Endothelial cell of umbilical vein (primary cell): ENCODE measurements at regions of chr7 and their contacts with region 1.

Region 1: DNA sequence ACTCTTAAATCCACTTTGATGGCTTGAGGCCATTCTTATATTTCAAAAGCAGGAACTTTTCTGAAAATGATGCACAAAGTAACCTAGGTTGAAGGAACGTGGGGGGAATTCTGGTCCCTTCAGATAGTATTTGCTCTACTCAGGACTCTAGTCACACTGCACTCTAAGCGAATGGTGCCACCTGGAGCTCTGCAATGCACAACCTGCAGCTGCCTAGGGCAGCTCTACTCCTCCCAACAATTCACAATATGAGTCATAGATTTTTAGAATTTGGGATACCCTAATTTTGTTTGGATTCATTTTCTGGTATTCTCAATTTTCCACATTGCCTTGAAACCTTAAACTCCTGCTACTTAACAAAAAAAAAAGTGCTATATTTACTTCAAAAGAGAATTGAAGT is 17.3 kb downstream of the SYPL1 start:
- DNase-seq: no peak
- H3K4me3 ChIP-seq: no peak overlapping the region
- H3K27ac ChIP-seq: no peak overlapping the region
- H3K4me1 ChIP-seq: no peaks in the 10 kb centered on the region
- H3K27me3 ChIP-seq: no peaks in the 10 kb centered on the region
- CTCF ChIP-seq: no peak
- POLR2A ChIP-seq: no peak

Region 2: GRCh38 chr7:106071356-106071998 is 23.3 kb before region 1 on chr7:
- CTCF ChIA-PET with region 1: interaction called, 4 read pairs
- POLR2A ChIA-PET with region 1: interaction called, 12 read pairs
- dilution Hi-C with region 1: no loop called
- intact Hi-C with region 1: no loop called
- DNase-seq: peak; percentile 79
- H3K4me3 ChIP-seq: no peak overlapping the region
- H3K27ac ChIP-seq: peak overlapping the region; percentile 60
- H3K4me1 ChIP-seq: peaks cover 20% of the 10 kb centered on the region
- H3K27me3 ChIP-seq: no peaks in the 10 kb centered on the region
- CTCF ChIP-seq: no peak
- POLR2A ChIP-seq: no peak

Region 3: GRCh38 chr7:106126170-106126938 is 31.6 kb after region 1 on chr7:
- CTCF ChIA-PET with region 1: no interaction called
- POLR2A ChIA-PET with region 1: no interaction called
- dilution Hi-C with region 1: no loop called
- intact Hi-C with region 1: no loop called
- DNase-seq: peak; percentile 72
- H3K4me3 ChIP-seq: peak overlapping the region in 2 of 3 experiments; percentile 13 to 38
- H3K27ac ChIP-seq: no peak overlapping the region
- H3K4me1 ChIP-seq: peaks cover 8% of the 10 kb centered on the region
- H3K27me3 ChIP-seq: peaks cover 5 to 16% of the 10 kb centered on the region in 2 experiments
- CTCF ChIP-seq: no peak
- POLR2A ChIP-seq: no peak

Region 4: DNA sequence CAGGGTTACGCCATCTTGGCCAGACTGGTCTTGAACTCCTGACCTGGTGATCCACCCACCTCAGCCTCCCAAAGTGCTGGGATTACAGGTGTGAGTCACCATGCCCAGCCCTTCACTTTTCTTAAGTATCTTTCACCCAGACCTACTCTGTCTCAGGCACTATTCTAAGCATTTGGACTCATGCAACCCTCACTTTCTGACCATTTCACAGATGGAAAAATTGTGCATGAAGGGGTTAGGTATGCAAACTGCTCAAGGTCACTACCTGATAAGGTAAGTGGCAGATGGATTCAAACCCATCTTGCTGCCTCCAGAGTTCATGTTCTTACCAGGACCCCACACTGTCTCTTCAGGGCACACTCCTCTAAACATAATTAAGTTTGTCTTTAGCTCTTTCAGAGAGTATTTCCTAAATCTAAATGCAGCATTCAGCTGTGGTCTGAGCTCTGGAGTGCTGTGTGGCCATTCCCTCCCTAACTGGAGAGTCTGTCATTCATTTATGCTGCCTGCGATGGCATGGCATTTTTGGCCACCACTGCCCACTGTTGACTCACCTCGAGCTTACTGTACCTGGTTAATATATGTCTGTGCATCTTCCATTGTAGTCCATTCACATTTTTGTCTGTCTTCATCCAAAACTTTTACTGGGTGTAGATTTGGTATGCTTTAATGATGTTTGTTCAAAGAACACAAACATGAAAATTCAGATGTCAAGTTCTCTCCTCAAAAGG is 477.8 kb after region 1 on chr7:
- CTCF ChIA-PET with region 1: no interaction called
- POLR2A ChIA-PET with region 1: no interaction called
- dilution Hi-C with region 1: no loop called
- intact Hi-C with region 1: no loop called
- DNase-seq: no peak
- H3K4me3 ChIP-seq: no peak overlapping the region
- H3K27ac ChIP-seq: no peak overlapping the region
- H3K4me1 ChIP-seq: no peaks in the 10 kb centered on the region
- H3K27me3 ChIP-seq: no peaks in the 10 kb centered on the region
- CTCF ChIP-seq: no peak
- POLR2A ChIP-seq: no peak

Region 5: GRCh38 chr7:106887421-106887820 is 792.6 kb after region 1 on chr7:
- CTCF ChIA-PET with region 1: no interaction called
- POLR2A ChIA-PET with region 1: no interaction called
- dilution Hi-C with region 1: no loop called
- intact Hi-C with region 1: no loop called
- DNase-seq: no peak
- H3K4me3 ChIP-seq: no peak overlapping the region
- H3K27ac ChIP-seq: no peak overlapping the region
- H3K4me1 ChIP-seq: no peaks in the 10 kb centered on the region
- H3K27me3 ChIP-seq: no peaks in the 10 kb centered on the region
- CTCF ChIP-seq: no peak
- POLR2A ChIP-seq: no peak